AG04449 (cell line): ENCODE measurements at regions of chr14 and their contacts with region 1.

Region 1: DNA sequence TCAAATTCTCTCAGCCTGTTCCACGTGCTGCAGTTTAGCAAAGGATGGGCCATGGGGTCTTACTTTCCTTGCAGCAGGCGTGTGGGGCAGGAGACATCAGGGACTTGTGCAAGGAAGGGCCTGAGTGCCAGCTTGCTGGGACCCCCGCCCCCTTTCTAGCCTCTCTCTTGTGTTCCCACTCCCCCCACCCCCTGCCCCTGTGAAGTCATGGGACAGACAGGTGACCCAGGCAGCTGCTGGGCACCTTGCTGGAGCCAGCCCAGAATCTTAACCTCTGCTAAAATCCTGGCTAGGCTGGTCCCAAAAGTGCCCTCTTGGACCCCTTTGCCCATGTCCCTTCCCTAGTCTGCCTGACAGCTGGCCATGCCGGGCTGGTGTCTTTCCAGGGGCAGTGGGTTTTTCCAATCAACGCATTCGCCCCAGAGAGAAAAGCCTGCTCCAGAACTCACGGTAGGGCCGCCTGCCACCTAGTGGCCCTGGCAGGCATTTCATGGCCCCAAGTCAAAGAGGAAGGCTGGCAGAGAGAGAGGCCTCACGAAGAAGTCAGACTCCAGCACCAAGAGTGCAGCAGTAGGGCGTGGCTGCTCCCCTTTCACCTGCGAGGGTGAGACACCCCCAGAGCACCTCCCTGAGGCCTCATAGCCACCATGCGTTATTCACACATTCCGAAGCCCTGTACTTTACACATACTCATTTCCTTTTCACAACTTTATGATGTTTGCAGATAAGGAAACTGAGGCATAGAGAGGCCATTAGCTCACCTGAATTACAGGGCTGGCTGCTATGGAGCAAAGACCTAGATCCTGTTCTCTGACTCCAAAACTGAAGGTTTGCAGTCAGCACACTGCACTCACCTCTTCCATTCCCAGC is 67.4 kb downstream of the LGMN start:
- DNase-seq: no peak
- H3K4me3 ChIP-seq: no peak overlapping the region
- CTCF ChIP-seq: peak; percentile 86

Region 2: GRCh38 chr14:92135267-92135666 is 545.7 kb before region 1 on chr14:
- CTCF ChIA-PET with region 1: interaction called, 27 read pairs
- POLR2A ChIA-PET with region 1: no interaction called
- DNase-seq: no peak
- H3K4me3 ChIP-seq: no peak overlapping the region
- CTCF ChIP-seq: peak; percentile 33

Region 3: GRCh38 chr14:92456215-92457015 is 224.6 kb before region 1 on chr14:
- CTCF ChIA-PET with region 1: interaction called, 11 read pairs
- POLR2A ChIA-PET with region 1: no interaction called
- DNase-seq: peak; percentile 14
- H3K4me3 ChIP-seq: no peak overlapping the region
- CTCF ChIP-seq: peak; percentile 80

Region 4: GRCh38 chr14:92513204-92513973 is 167.6 kb before region 1 on chr14 and contains the start of gene RIN3:
- CTCF ChIA-PET with region 1: interaction called, 10 read pairs
- POLR2A ChIA-PET with region 1: no interaction called
- DNase-seq: no peak
- H3K4me3 ChIP-seq: peak within 1 kb of the TSS; percentile 76
- CTCF ChIP-seq: no peak

Region 5: DNA sequence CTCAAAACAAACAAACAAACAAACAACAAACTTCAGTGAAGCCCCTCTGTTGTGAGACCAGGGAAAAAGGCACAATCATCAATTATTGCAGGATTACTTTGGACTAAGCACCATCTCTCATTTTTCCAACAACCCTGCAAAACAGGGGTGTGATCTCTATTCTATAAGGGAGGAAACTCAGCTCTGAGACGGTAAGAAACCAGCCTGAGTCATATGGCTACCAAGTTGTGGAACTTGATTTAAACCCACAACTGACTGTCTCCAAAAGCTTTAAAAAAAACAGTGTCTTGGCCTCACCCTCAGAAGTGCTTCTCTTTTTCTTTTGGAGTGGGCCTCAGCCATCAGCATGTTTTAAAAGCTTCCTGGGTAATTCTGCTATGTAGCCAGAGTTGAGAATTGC is 117.7 kb before region 1 on chr14:
- CTCF ChIA-PET with region 1: interaction called, 16 read pairs
- POLR2A ChIA-PET with region 1: no interaction called
- DNase-seq: no peak
- H3K4me3 ChIP-seq: no peak overlapping the region
- CTCF ChIP-seq: no peak

Region 6: DNA sequence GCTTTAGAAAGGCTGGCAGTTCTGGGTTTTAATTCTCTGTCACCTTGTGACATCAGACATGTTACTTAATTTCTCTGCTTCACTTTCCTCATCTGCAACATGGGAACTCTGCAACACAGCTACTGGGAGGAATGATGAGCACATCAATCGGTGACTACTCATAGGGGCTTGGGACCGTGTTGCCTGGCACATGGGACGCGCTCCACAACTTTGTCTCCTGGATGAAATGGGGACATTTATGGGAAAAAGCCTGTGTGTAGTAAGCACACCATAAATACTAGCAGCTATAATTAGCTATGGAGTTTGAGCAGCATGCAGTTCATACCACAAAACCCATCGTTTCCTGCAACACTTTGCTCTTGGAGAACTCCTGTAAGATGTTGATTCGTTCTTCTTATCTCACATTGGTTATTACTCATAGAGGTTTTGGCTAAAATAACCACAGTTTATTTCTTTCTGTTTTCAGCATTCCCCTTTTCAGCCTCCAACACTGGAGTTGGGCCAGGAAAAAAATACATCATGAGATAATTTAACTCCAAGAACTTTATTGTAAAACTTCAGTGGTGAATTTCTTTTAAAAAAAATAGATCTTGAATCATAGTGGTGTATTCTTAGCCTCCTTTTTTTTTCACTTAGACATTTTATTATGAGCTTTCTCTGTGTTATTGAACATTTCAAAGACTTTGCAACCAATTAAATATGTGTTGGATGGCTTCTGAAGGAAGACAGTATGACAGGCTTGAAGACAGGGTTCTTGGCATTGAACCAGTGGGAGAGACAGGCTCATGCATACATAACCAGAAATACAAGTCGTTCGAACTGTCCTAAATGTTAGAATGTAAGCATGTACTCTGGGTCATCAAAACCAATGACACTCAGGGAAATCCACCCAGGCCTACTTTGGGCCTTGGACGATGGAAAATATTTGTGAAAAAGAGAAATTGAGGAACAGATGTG is 94.8 kb before region 1 on chr14:
- CTCF ChIA-PET with region 1: interaction called, 22 read pairs
- POLR2A ChIA-PET with region 1: no interaction called
- DNase-seq: peak; percentile 99
- H3K4me3 ChIP-seq: no peak overlapping the region
- CTCF ChIP-seq: no peak

Region 7: DNA sequence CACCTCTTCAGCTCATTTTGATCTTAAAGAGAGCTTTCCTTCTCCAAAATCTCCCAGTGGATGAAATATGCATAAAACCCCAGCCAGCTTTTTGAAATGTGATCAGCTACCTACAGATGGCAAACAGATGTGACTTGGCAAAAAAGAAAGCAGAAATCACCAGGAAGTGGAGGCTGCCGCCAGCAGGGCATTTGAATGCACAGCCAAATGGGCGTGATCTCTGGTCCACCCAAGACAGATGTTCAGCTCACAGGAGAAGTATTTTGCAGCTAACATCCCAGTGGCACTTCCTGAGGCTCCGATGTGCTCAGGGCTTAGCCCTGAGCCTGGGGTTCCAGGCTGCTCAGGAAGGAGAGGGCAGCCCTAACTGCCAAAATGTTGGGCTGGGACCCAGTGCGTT is 10.9 kb before region 1 on chr14:
- CTCF ChIA-PET with region 1: interaction called, 27 read pairs
- POLR2A ChIA-PET with region 1: interaction called, 3 read pairs
- DNase-seq: no peak
- H3K4me3 ChIP-seq: no peak overlapping the region
- CTCF ChIP-seq: peak; percentile 23